ENCODE measurements at regions of chr6 and their contacts with region 1.

Region 1: DNA sequence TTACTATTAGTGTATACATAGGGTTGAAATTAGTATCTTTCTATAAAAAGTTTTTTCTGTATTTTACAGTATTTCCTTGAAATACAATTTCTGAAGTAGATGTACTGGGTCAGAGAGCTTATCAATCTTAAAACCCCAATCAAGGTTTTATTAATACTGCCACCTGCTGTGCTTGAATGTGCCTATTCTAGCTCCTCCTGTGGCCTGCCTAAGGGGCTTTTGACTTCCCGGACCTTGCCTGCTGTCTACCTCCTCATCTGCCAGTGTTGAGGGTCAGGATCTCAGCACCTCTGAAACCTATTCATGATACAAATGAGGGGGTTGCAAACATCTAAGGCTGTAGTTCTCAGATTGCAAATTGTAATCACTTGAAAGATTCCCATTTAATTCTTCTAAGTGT is 9.2 kb downstream of the PACRG start:
- DNase-seq: no peak
- ATAC-seq: peak in 6 of 8 donors; percentile 39 to 72 (median 56)
- H3K4me3 ChIP-seq: no peak overlapping the region
- H3K27ac ChIP-seq: no peak overlapping the region
- H3K4me1 ChIP-seq: peaks cover 0 to 7% (median 0%) of the 10 kb centered on the region in 9 donors
- H3K27me3 ChIP-seq: no peaks in the 10 kb centered on the region
- CTCF ChIP-seq: peak in 7 of 9 donors; percentile 24 to 69 (median 56)

Region 2: GRCh38 chr6:162442687-162443086 is 294.3 kb before region 1 on chr6:
- intact Hi-C with region 1: loop called in 5 of 10 experiments (anchors 5 to 10 kb)
- DNase-seq: no peak
- ATAC-seq: peak in 7 of 8 donors; percentile 60 to 76 (median 67)
- H3K4me3 ChIP-seq: no peak overlapping the region
- H3K27ac ChIP-seq: no peak overlapping the region
- H3K4me1 ChIP-seq: peaks cover 0 to 4% (median 0%) of the 10 kb centered on the region in 9 donors
- H3K27me3 ChIP-seq: no peaks in the 10 kb centered on the region
- CTCF ChIP-seq: peak in 7 of 9 donors; percentile 34 to 57 (median 52)

Region 3: GRCh38 chr6:162448294-162448693 is 288.7 kb before region 1 on chr6:
- intact Hi-C with region 1: loop called in 5 of 10 experiments (anchors 5 to 10 kb)
- DNase-seq: no peak
- ATAC-seq: peak in 7 of 8 donors; percentile 50 to 88 (median 84)
- H3K4me3 ChIP-seq: no peak overlapping the region
- H3K27ac ChIP-seq: no peak overlapping the region
- H3K4me1 ChIP-seq: peaks cover 0 to 4% (median 0%) of the 10 kb centered on the region in 9 donors
- H3K27me3 ChIP-seq: no peaks in the 10 kb centered on the region
- CTCF ChIP-seq: no peak

Region 4: GRCh38 chr6:162922563-162923166 is 185.7 kb after region 1 on chr6:
- intact Hi-C with region 1: no loop called
- DNase-seq: no peak
- ATAC-seq: no peak
- H3K4me3 ChIP-seq: no peak overlapping the region
- H3K27ac ChIP-seq: no peak overlapping the region
- H3K4me1 ChIP-seq: no peaks in the 10 kb centered on the region
- H3K27me3 ChIP-seq: no peaks in the 10 kb centered on the region
- CTCF ChIP-seq: no peak

Measured in heart right ventricle (tissue), 16 donors.